ENCODE measurements at regions of chr9 and their contacts with region 1.

Region 1: DNA sequence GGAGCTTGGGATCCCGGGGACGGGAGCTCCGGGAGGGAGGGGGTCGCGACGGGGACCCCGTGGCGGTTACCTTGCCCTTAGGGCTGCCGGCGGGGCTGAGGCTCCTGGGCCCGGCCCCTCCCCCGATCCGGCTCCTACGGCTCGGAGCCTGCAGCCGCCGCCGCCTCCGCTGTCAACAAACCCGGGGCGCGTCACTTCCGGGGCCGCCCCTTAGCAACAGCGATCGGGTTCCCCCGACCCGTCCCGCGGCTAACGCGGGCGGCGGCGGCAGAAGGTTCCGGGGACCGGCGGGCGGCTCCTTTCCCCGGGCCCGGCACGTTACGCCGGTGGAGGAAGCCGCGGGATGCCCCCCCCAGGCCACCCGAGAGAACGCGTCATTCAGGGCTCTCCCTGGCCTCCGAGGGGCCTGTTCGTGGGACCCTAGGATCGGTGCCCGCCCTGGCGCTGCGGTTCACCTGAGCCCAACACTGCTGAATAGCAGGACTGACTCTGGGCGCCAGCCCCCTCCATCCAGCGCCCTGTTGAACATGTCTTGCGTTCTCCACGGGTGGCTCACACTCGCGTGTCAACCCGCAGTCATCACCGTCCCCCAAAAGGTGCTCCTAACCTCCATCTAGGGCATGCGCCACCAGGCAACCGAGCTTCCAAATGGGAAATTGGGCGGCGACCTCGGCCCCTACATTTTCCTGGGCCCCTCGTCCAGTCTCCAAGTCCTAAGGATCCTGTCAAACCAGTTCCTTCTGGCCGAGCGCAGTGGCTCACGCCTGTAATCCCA is at the start of gene ZER1:
- DNase-seq: peak; percentile 99
- ATAC-seq: peak; percentile 98
- total RNA-seq, gene ZER1: 51.5 TPM

Region 2: DNA sequence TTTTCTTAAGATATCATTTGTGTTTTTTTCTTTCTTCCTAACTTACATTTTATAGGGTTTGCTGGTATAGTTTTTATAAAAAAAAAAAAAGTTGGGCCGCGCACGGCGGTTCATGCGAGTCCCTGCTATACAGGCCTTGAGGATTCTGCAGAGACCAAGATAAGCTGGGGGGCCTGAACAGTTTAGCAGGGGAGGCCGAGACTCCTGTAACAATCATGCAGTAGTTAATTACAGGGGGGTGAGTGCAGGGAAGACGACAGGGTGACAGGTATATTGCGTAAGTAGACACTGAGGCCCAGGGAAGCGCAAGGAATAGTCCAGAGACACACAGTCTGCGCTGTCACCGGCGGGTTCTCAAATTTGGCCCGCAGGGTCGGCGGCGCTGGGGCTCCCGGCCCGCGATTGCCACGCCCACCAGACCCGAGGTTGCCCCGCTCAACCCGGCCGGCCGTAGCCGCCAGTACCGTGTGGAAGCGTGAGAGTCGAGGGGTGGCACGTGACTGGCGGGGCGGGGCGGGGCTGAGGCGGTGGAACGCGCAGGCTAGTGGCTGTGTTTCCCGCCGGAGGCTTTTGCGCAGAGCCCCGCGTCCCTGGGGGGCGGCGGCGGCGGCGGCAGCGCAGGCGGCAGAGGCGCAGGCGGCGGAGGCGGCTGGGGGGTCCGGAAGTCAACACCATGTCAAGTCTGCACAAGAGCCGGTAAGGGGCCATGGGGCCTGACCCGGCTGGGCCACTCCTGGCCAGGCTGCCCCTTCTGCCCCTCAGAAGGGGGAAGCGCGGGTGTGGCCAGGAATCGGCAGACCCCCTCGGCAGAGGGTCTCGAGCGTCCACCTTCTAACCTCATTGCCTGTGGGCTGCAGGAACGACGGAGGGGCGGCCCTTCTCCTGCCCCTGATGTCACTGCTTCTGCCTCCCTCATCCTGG is 15.0 kb after region 1 on chr9 and contains the start of gene TBC1D13:
- intact Hi-C with region 1: loop called (anchors 1 kb)
- DNase-seq: peak; percentile 93
- ATAC-seq: peak; percentile 98
- total RNA-seq, gene TBC1D13: 16.6 TPM

Region 3: DNA sequence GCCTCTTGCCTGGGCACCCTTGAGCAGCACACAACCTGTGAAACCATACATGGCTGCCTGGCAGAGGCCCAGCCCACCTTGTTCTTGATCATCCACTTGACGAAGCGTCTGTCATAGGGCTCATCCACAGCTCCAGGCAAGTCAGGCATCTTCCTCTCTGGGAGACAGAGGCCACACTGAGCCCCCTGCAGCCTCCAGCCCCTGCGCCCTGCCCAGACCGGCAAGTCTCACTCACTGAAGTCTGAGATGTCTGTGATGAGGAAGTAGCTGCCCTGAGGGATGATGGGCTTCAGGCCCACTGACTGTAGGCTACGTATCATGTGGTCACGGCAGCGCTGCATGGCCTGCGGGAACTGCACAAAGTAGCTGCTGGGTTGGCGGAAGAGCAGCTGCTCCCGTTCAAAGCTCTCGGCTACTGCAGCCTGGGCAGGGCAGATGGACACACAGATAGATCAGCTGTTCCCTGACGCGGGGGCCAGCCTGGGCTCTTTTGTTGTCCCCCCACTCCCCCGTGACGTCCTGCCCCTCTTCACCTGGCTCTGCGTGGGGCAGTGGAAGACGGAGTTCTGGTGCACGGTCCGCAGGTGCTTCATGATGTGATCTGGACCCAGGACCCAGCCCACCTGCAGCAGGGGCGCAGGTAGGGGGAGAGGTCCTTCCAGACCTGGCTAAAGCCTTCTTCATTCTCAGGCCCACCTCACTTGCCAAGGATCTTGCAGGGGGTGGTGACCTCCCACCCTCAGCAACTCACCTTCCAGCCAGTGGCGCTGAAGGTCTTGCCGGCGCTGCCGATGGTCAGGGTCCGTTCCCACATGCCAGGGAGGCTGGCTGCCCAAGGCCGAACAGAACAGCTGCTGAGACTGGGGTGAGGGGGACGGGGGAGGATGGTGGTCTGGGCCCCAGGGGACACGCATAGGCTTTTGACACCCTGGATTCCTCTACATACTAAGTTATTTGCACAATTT is 63.6 kb after region 1 on chr9:
- intact Hi-C with region 1: no loop called
- DNase-seq: no peak
- ATAC-seq: no peak

Region 4: DNA sequence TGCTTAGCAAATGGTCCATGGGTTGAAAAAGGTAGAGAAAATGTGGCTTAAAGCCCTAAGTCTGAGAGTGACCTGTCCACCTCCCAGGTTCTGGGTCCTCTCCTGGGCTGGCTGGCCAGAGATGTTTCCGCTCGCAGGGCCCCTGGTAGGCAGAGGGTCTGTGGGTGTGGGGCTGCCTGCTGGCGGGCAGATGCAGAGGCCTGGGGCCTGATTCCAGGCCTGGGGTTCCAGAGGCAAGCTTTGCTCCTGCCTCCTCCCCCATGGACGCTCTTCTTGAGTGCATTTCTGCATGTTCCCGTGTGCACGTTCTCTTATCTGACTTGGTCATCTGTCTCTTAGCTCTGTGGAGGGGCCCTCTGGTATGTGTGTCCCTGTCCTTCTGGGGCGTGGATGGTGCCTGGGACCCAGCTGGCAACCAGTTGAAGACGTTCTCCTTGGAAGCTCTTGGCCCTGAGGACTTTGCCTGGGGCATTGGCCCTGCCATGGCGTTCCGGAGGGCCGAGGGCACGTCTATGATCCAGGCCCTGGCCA is 268.2 kb after region 1 on chr9:
- intact Hi-C with region 1: no loop called
- DNase-seq: no peak
- ATAC-seq: no peak

Measured in Right ventricle myocardium inferior (tissue), 1 donor.